MCF 10A (cell line): ENCODE measurements at regions of chr9 and their contacts with region 1.

Region 1: GRCh38 chr9:347667-348292 is 133.1 kb downstream of the DOCK8 start:
- DNase-seq: peak; percentile 57
- H3K4me3 Mint-ChIP-seq: no peak overlapping the region
- H3K27ac Mint-ChIP-seq: no peak overlapping the region
- H3K4me1 Mint-ChIP-seq: no peaks in the 10 kb centered on the region
- H3K27me3 Mint-ChIP-seq: peaks cover 13% of the 10 kb centered on the region
- CTCF ChIP-seq: peak; percentile 78

Region 2: DNA sequence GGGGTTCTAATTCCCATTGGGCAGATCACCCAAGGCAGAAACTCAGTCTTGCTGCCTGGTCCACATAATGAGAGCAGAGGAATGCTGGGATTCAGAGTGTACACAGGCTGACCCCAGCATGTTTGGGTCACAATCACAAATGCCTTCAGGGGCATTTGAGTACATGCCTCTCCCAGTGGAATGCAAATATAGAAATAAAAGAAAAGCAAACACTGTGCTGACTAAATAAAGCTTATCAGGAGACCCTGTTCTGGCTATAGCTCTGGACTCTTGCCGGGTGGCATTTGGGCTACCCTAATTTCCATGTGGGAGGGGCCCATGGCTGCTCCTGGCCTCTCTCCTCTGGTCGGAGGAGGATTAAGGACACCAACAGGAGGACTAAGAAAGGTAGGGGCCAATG is 11.7 kb before region 1 on chr9:
- CTCF ChIA-PET with region 1: interaction called, 14 read pairs
- POLR2A ChIA-PET with region 1: interaction called, 3 read pairs
- intact Hi-C with region 1: no loop called
- DNase-seq: no peak
- H3K4me3 Mint-ChIP-seq: no peak overlapping the region
- H3K27ac Mint-ChIP-seq: no peak overlapping the region
- H3K4me1 Mint-ChIP-seq: no peaks in the 10 kb centered on the region
- H3K27me3 Mint-ChIP-seq: no peaks in the 10 kb centered on the region
- CTCF ChIP-seq: no peak

Region 3: DNA sequence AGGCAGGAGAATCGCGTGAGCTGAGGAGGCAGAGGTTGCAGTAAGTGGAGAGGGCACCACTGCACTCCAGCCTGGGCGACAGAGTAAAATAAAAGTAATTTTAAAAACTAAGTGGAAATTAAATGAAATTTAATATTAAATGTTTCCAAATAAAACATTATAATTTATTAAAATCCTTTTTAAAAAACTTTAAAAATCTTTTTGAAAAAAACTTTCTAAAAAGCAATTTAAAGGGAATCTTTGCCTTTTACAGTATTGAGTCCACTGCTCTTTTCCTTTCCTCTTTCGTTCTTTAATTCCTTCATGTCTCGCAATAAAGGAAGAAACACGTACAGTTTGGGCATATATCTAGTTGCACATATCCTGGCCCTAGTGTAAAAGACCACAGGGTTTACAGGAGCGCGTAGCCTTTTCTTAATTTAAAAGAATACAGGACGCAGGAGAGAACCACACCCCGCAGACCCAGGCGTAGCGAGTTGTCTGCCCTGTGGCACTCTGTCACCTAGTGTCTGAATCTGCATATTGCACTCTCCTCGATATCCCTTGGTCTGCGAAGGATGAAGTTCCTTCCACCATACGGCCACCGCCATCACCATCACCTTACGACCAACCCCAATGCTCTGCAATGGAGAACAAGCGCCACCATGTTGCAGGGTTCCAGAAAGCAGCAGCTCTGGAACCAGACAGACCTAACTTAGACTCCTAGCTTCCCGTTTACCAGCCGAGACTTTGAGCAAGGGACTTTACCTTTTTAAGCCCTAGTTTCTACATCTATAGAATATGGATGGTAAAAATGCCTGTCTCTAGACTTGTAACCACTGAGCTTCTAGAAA is 416.1 kb after region 1 on chr9:
- CTCF ChIA-PET with region 1: interaction called, 11 read pairs
- POLR2A ChIA-PET with region 1: no interaction called
- intact Hi-C with region 1: no loop called
- DNase-seq: peak; percentile 71
- H3K4me3 Mint-ChIP-seq: no peak overlapping the region
- H3K27ac Mint-ChIP-seq: no peak overlapping the region
- H3K4me1 Mint-ChIP-seq: peaks cover 5% of the 10 kb centered on the region
- H3K27me3 Mint-ChIP-seq: peaks cover 13% of the 10 kb centered on the region
- CTCF ChIP-seq: peak; percentile 71

Region 4: DNA sequence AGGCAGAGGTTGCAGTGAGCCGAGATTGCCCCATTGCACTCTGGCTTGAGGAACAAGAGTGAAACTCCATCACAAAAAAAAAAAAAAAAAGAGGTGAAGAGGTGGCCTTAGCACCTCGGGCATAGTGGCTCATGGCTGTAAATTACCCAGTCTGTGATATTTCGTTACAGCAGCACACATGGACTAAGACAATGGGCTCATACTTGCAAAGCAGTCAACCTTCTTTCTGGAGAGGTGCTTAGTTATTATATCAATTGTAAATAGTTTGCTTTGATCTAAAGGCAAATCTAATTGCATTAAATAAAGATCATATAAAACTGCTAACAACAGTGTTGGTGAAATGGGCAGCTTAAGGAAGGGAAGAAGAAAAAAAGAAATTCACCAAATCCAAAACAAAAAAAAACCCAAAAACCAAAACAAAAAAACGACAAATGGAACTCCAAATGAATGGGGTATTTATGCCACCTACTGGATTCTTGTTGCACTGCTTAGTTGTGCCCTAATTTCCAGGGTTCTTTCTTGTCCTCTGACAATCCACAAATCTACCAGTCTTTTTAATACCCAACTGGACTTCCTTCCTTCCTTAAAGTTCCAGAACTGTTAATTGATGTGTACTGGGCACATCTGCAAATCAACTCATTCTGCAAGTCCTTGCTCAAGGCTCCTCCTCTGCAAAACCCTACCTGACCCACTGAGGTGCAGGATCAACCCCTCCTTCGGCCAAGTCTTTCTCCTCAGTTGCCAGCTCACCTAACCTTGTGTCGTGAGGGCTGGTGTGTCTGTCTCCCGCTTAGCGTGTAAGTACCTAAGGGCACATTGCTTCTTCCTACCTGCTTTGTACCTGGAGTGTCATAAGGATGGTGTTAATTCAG is 458.7 kb after region 1 on chr9:
- CTCF ChIA-PET with region 1: interaction called, 9 read pairs
- POLR2A ChIA-PET with region 1: no interaction called
- intact Hi-C with region 1: loop called (anchors 2 kb)
- DNase-seq: peak; percentile 60
- H3K4me3 Mint-ChIP-seq: no peak overlapping the region
- H3K27ac Mint-ChIP-seq: no peak overlapping the region
- H3K4me1 Mint-ChIP-seq: peaks cover 18% of the 10 kb centered on the region
- H3K27me3 Mint-ChIP-seq: no peaks in the 10 kb centered on the region
- CTCF ChIP-seq: peak; percentile 79